ENCODE measurements at regions of chr18 and their contacts with region 1.

Region 1: GRCh38 chr18:58402247-58402646 is 226.6 kb downstream of the ALPK2 start:
- DNase-seq: no peak
- H3K4me3 ChIP-seq: no peak overlapping the region
- H3K27ac ChIP-seq: peak overlapping the region in 1 of 4 donors; percentile 22
- H3K4me1 ChIP-seq: peaks cover 6 to 26% (median 10%) of the 10 kb centered on the region in 4 donors
- H3K27me3 ChIP-seq: no peaks in the 10 kb centered on the region
- CTCF ChIP-seq: peak in 3 of 5 experiments; percentile 6 to 37 (median 26)
- EP300 ChIP-seq: no peak
- POLR2A ChIP-seq: no peak

Region 2: GRCh38 chr18:57276739-57277298 is 1125.4 kb before region 1 on chr18:
- in situ Hi-C with region 1: no loop called
- intact Hi-C with region 1: no loop called
- DNase-seq: no peak
- H3K4me3 ChIP-seq: no peak overlapping the region
- H3K27ac ChIP-seq: no peak overlapping the region
- H3K4me1 ChIP-seq: no peaks in the 10 kb centered on the region
- H3K27me3 ChIP-seq: no peaks in the 10 kb centered on the region
- CTCF ChIP-seq: no peak
- EP300 ChIP-seq: no peak
- POLR2A ChIP-seq: no peak

Region 3: GRCh38 chr18:58310517-58310916 is 91.7 kb before region 1 on chr18:
- in situ Hi-C with region 1: no loop called
- intact Hi-C with region 1: no loop called
- DNase-seq: peak; percentile 87
- H3K4me3 ChIP-seq: no peak overlapping the region
- H3K27ac ChIP-seq: peak overlapping the region; percentile 71 to 76 (median 73)
- H3K4me1 ChIP-seq: peaks cover 36 to 57% (median 47%) of the 10 kb centered on the region in 4 donors
- H3K27me3 ChIP-seq: no peaks in the 10 kb centered on the region
- CTCF ChIP-seq: no peak
- EP300 ChIP-seq: peak; percentile 5
- POLR2A ChIP-seq: peak; percentile 35

Region 4: GRCh38 chr18:58484989-58485981 is 83.0 kb after region 1 on chr18:
- in situ Hi-C with region 1: loop called in 1 of 4 experiments (anchors 10 kb)
- intact Hi-C with region 1: no loop called
- DNase-seq: peak; percentile 46
- H3K4me3 ChIP-seq: no peak overlapping the region
- H3K27ac ChIP-seq: peak overlapping the region in 2 of 4 donors; percentile 10 to 48
- H3K4me1 ChIP-seq: peaks cover 3 to 18% (median 12%) of the 10 kb centered on the region in 4 donors
- H3K27me3 ChIP-seq: no peaks in the 10 kb centered on the region
- CTCF ChIP-seq: no peak
- EP300 ChIP-seq: no peak
- POLR2A ChIP-seq: no peak

Region 5: DNA sequence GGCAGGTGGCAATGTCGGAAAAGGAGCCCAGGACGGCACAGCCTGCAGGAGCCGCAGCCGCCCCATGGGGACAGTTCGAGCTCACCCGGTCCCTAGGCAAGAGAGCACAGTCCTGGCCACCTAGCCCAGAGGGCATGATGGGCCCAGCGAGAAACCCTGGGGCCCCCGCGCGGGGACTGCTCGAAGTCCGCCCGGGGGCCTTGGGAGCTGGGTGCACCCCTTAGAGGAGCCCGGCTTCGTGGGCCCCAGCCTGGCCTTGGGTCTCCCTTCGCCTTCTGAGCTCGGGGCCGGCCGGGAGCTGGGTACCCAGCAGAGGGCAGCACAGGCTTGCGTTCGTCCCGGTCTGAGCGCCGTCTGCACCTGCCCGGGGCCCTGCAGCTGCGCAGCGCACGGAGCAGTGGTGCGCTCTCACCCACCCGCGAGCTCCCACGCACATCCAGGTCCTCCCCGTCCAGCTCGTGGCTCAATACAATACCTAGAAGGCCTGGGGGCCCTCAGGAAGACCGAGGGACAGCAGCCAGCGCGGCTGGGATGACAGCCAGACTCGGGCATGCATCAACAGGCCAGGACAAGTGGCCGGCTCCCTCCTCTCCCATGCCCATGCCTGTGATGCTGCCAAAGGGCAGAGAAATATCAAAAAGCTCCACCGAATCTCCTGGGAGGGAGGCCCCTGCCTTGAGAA is 366.2 kb after region 1 on chr18:
- in situ Hi-C with region 1: loop called in 1 of 4 experiments (anchors 25 kb)
- intact Hi-C with region 1: no loop called
- DNase-seq: peak; percentile 83
- H3K4me3 ChIP-seq: peak overlapping the region in 2 of 4 donors; percentile 16 to 40
- H3K27ac ChIP-seq: no peak overlapping the region
- H3K4me1 ChIP-seq: peaks cover 7 to 19% (median 12%) of the 10 kb centered on the region in 4 donors
- H3K27me3 ChIP-seq: peaks cover 23% of the 10 kb centered on the region
- CTCF ChIP-seq: peak; percentile 65 to 81 (median 77)
- EP300 ChIP-seq: no peak
- POLR2A ChIP-seq: no peak